Tibial artery (tissue), 4 donors: ENCODE measurements at regions of chr11 and their contacts with region 1.

Region 1: GRCh38 chr11:43644621-43645299 is 35.8 kb upstream of the HSD17B12 start:
- DNase-seq: no peak
- H3K4me3 ChIP-seq: peak overlapping the region; percentile 86 to 90
- H3K27ac ChIP-seq: peak overlapping the region; percentile 76 to 82
- H3K4me1 ChIP-seq: peaks cover 0 to 19% (median 8%) of the 10 kb centered on the region in 4 donors
- H3K27me3 ChIP-seq: peaks cover 0 to 15% of the 10 kb centered on the region in 2 donors
- CTCF ChIP-seq: no peak

Region 2: DNA sequence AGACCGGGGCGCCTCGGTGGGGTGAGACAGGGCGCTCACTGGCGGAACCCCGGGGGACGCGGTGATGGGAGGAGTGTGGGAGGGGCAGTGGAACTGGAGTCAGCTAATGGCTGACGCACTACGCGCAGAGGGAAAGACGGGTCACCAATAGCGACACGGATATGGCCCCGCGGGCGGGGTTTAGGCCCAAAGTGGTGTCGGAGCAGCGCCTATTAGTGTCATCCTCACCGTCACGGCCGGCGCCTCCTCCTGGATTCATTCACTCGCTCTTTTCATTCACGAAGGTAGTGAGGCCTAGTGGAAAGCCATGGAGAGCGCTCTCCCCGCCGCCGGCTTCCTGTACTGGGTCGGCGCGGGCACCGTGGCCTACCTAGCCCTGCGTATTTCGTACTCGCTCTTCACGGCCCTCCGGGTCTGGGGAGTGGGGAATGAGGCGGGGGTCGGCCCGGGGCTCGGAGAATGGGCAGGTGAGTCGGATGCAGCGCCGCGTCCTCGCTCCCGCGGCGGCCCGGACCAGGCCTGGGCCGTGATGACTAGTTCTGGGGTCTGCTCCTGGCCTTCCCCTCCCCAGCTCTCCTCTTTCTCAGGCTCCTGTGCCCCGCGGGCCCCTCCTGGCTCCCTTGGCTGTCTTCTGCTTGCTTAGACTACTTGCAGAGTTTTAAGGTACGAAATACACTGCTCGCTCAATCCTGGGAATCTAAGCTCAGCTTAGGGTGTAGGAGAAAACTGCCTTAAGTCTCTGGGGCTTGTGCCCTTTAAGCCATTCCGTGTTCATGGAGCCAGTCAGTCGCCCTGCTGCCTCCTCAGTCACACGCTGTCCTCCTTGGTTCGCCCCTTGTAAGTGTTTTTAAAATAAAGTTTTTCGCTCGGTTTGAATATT is 36.0 kb after region 1 on chr11 and contains the start of gene HSD17B12:
- intact Hi-C with region 1: loop called (anchors 5 kb)
- DNase-seq: peak; percentile 99
- H3K4me3 ChIP-seq: peak within 1 kb of the TSS; percentile 67 to 85
- H3K27ac ChIP-seq: peak within 1 kb of the TSS; percentile 77 to 92
- H3K4me1 ChIP-seq: peaks cover 0 to 34% (median 14%) of the 10 kb centered on the region in 4 donors
- H3K27me3 ChIP-seq: no peaks in the 10 kb centered on the region
- CTCF ChIP-seq: no peak